Gastrocnemius medialis (tissue), 4 donors: ENCODE measurements at regions of chr19 and their contacts with region 1.

Region 1: GRCh38 chr19:14517840-14518505 is at the start of gene DNAJB1:
- DNase-seq: peak; percentile 76 to 81
- ATAC-seq: peak; percentile 79 to 81
- H3K4me3 ChIP-seq: peak within 1 kb of the TSS; percentile 68 to 99 (median 88)
- H3K27ac ChIP-seq: peak within 1 kb of the TSS; percentile 96 to 100 (median 100)
- H3K4me1 ChIP-seq: peaks cover 31 to 33% of the 10 kb centered on the region in 2 donors
- H3K27me3 ChIP-seq: no peaks in the 10 kb centered on the region
- CTCF ChIP-seq: no peak
- POLR2A ChIP-seq: peak; percentile 95 to 100
- total RNA-seq, gene DNAJB1: 12.3 to 27.3 (median 16.6) TPM

Region 2: DNA sequence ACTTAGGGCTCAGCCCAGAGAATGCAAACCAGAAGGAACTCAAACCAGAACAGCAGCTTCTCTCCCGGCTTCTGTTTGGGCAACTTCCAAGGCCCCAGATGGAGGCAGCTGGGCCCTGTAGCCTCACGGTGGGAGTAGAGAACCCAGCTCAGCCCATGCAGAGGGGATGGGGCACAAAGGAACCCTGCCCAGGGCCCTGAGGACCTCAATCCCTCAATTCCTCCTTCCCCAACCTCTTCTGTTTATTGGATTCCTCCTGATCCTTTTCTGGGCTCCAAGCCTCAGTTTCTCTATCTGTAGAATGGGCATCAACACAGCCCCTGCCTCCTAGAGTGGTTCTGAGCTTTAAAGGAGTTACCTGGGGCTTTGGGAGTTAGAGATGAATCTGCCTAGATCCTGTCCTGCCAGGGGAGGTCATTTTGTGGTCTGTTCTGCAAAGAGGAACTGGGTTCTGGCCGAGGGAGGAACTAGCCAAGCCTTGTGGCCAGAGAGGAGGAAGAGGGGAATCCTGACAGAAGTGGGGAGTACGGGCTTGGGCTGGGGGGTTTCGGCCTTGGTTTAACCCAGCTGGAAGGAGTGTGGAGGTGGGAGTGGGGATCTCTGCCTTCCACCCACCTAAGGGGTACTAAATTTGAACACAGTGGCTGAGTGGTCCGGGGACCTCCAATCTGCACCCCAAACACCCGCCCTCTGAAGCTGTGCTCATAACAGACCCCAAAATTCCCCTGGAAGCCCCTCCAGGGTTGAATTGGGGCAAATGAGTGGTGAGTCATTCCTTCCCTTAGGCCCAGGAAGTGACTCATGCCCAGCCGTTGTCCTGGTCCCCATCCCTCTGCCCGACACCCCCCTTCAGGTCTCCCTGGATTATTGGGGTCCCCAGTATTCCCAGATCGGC is 134.1 kb before region 1 on chr19:
- in situ Hi-C with region 1: no loop called
- intact Hi-C with region 1: loop called (anchors 5 kb)
- DNase-seq: peak; percentile 27 to 47
- ATAC-seq: no peak
- H3K4me3 ChIP-seq: peak overlapping the region; percentile 33 to 74 (median 38)
- H3K27ac ChIP-seq: peak overlapping the region; percentile 64 to 97 (median 86)
- H3K4me1 ChIP-seq: peaks cover 29 to 30% of the 10 kb centered on the region in 2 donors
- H3K27me3 ChIP-seq: no peaks in the 10 kb centered on the region
- CTCF ChIP-seq: no peak
- POLR2A ChIP-seq: no peak

Region 3: DNA sequence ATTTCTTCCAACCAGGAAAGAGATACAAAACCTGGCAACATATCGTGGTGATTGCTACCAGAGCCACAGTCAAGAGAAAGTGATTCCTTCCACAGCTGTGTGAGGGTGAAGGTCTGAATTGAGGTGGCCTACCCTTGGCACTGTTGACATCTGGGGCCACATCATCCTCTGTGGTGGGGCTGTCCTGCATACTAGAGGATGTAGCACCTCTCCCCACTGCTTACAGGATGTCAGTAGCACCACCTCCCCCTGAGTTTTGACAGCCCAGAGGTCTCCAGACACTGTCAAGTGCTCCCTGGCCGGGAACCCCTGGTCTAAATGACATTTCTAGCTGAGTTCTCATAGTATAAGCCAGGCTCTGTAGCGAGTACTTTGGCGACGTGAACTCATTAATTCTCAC is 58.3 kb before region 1 on chr19:
- in situ Hi-C with region 1: no loop called
- intact Hi-C with region 1: no loop called
- DNase-seq: no peak
- ATAC-seq: no peak
- H3K4me3 ChIP-seq: no peak overlapping the region
- H3K27ac ChIP-seq: no peak overlapping the region
- H3K4me1 ChIP-seq: no peaks in the 10 kb centered on the region
- H3K27me3 ChIP-seq: no peaks in the 10 kb centered on the region
- CTCF ChIP-seq: no peak
- POLR2A ChIP-seq: no peak

Region 4: DNA sequence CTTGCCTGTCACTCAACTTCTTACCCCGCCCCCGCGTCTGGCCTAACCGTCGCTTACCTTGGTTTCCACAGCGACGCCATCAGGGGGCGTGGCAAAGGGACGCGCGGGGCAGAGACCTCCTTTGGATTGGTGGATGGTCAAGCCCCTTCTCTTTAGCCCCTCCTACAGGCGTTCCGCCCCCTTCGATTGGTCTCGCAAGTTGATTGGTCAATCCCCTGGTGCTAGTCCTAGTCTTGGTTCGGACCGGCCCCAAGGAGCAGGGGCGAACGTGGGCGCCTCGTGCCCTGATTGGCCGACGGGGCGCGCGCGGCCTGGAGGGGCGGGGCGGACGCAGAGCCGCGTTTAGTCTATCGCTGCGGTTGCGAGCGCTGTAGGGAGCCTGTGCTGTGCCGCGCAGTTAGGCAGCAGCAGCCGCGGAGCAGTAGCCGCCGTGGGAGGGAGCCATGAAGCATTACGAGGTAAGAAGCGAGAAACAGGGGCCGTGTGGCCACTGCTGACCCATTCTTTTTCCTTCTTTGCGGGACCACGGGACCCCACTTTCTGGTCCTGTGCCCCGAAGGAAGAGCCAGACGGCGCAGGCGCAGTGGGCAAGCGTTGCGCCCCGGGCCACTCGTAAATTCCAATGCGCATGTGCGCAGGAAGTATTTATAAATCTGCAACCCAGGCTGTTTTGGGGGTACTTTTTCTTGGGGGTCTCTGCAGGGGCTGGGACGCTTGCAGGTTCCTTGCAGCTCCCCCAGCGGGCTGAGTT is 11.5 kb after region 1 on chr19 and contains the start of gene TECR:
- in situ Hi-C with region 1: no loop called
- intact Hi-C with region 1: loop called (anchors 1 kb)
- DNase-seq: peak; percentile 100
- ATAC-seq: peak; percentile 96
- H3K4me3 ChIP-seq: peak within 1 kb of the TSS; percentile 80 to 98 (median 84)
- H3K27ac ChIP-seq: peak within 1 kb of the TSS; percentile 95 to 98 (median 98)
- H3K4me1 ChIP-seq: peaks cover 24 to 37% of the 10 kb centered on the region in 2 donors
- H3K27me3 ChIP-seq: no peaks in the 10 kb centered on the region
- CTCF ChIP-seq: no peak
- POLR2A ChIP-seq: peak; percentile 96 to 97
- total RNA-seq, gene TECR: 56.2 to 155 (median 113) TPM

Region 5: DNA sequence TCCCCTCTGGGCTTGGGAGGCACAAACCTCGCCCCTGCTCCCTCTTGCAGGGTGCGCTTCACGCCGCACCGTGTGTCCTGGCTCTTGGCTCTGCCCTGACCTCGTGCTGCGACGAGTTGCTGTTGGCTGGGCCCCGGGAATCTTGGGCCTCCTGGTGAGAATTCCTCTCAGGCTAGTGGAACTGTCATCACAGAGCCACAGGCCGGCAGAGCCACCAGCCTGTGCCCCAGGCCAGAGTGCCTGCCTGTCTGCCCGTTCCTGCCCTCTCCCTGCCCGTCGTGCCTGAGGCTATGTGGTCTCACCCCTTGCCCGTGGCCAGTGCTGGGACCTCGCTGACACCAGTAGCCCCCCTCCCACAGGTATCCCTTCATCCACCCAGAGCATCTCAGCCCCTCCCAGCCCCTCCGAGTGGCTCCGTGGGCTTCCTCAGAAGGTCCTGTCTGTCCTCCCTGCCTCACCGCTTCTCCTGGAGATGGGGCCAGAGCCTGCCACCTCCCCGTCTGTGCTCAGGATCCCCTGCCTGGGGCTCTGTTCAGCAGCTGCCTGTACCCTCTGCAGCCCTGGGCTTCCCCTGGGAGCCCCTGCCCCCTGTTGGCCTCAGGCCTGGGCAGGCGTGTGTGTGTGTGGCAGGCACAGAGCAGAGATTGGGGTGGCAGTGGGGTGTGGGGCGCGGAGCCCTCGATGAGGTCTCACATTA is 40.5 kb after region 1 on chr19:
- in situ Hi-C with region 1: loop called in 1 of 4 experiments (anchors 10 kb)
- intact Hi-C with region 1: loop called (anchors 1 kb)
- DNase-seq: peak in 1 of 2 donors; percentile 71
- ATAC-seq: peak in 1 of 2 donors; percentile 13
- H3K4me3 ChIP-seq: peak overlapping the region in 1 of 4 donors; percentile 44
- H3K27ac ChIP-seq: peak overlapping the region; percentile 98 to 100 (median 99)
- H3K4me1 ChIP-seq: peaks cover 77 to 91% of the 10 kb centered on the region in 2 donors
- H3K27me3 ChIP-seq: no peaks in the 10 kb centered on the region
- CTCF ChIP-seq: no peak
- POLR2A ChIP-seq: no peak

Region 6: GRCh38 chr19:14674764-14675163 is 156.8 kb after region 1 on chr19 and contains the start of gene ADGRE3:
- in situ Hi-C with region 1: no loop called
- intact Hi-C with region 1: no loop called
- DNase-seq: no peak
- ATAC-seq: no peak
- H3K4me3 ChIP-seq: no peak within 1 kb of the TSS
- H3K27ac ChIP-seq: no peak within 1 kb of the TSS
- H3K4me1 ChIP-seq: no peaks in the 10 kb centered on the region
- H3K27me3 ChIP-seq: peaks cover 0 to 5% (median 2%) of the 10 kb centered on the region in 3 donors
- CTCF ChIP-seq: no peak
- POLR2A ChIP-seq: no peak
- total RNA-seq, gene ADGRE3: not detected